MCF 10A (cell line): ENCODE measurements at regions of chr7 and their contacts with region 1.

Region 1: GRCh38 chr7:74429153-74429747 is 24.5 kb upstream of the GTF2IRD1 start:
- DNase-seq: peak; percentile 33
- H3K4me3 Mint-ChIP-seq: no peak overlapping the region
- H3K27ac Mint-ChIP-seq: no peak overlapping the region
- H3K4me1 Mint-ChIP-seq: no peaks in the 10 kb centered on the region
- H3K27me3 Mint-ChIP-seq: no peaks in the 10 kb centered on the region
- CTCF ChIP-seq: no peak

Region 2: DNA sequence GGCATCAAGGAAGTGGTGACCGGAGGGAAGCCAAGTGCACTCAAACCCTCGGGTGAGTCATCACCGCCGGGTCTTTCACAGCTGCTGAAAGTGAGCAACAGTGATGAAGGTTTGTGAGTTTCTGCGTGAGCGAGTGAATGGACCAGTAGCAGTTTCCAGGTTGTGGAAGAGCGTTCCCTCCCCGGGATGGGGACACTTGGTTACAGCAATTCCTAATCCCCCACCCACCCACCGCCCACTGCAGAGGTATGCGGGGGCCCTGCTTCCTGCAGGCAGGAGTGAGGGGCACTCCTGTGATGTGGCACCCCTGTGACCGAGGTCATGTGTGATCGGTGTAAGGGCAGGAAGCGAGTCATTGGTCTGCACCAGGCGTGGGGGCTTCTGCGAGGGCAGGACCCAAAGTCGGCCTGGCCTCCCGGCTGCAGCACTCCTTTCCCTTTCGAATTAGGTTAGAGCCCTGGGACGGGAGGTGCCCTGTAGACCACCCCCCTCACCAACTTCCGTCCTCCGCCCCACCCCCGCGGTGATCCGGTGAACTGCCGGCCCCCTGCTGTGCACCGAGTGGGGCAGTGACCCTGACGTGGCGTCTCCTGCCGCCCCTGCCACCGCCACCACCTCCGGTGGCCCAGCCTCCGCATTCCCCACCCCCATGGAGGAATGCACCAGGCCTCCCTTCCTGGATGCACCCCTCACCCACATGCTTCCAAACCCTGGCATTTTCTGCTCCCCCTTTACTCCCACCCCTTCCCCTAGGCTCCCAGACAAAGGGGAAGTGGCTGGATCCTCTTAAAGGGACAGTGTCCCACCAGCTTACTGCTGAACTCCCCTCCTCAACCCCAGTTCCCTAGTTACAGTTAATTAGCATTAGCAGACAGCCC is 334.8 kb before region 1 on chr7:
- CTCF ChIA-PET with region 1: no interaction called
- POLR2A ChIA-PET with region 1: no interaction called
- intact Hi-C with region 1: no loop called
- DNase-seq: peak; percentile 91
- H3K4me3 Mint-ChIP-seq: no peak overlapping the region
- H3K27ac Mint-ChIP-seq: peak overlapping the region; percentile 39
- H3K4me1 Mint-ChIP-seq: peaks cover 19% of the 10 kb centered on the region
- H3K27me3 Mint-ChIP-seq: no peaks in the 10 kb centered on the region
- CTCF ChIP-seq: no peak

Region 3: DNA sequence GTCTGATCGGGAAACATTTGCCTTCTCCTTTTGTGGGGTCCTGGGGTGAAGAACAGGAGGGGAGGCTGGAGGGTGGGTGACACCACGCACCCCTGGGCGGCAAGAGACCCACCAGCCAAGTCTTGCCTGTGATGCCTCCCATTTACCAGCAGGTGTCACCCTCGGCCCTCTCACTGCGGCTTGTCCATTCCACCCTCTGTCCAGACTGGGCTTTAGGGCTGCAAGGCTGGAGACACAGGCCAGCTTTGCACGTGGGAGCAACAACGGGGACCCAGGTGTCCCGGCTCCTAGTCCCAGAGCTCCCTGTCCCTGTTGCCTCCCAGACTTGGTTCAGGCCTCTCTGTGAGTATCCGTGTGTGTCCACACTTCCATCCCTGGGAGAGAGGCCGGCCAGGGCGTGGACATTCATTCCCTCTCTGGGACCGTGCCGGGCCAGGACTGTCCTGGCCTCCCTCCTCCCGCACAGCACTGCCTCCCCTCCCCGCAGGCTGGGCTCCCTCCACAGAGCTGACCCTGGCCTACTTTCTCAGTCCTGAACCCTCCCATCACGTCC is 11.8 kb before region 1 on chr7:
- CTCF ChIA-PET with region 1: interaction called, 26 read pairs
- POLR2A ChIA-PET with region 1: no interaction called
- intact Hi-C with region 1: no loop called
- DNase-seq: peak; percentile 82
- H3K4me3 Mint-ChIP-seq: no peak overlapping the region
- H3K27ac Mint-ChIP-seq: no peak overlapping the region
- H3K4me1 Mint-ChIP-seq: peaks cover 6% of the 10 kb centered on the region
- H3K27me3 Mint-ChIP-seq: no peaks in the 10 kb centered on the region
- CTCF ChIP-seq: peak; percentile 96